ENCODE measurements at regions of chr1 and their contacts with region 1.

Region 1: DNA sequence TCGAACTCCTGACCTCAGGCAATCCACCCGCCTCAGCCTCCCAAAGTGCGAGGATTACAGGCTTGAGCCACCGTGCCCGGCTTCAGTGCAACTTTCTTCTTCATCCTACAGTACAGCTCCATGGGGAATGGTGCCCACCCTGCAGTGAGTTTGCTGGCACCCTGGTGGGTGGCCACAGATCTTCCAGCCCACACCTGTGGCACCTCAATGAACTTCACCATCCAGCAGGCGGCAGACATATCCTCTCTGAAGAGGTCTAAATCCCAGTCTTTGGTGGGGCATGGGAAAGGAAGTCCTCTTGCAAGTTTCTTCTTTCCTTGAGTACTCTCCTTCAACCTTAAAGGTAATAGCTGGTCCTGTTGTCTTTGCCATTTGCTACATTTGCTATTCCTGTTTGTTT is 18.1 kb upstream of the ZBTB8A start:
- DNase-seq: no peak
- ATAC-seq: peak; percentile 16; the same call in 1 of the 2 replicates
- H3K4me3 Mint-ChIP-seq: peak overlapping the region; percentile 67
- H3K27ac Mint-ChIP-seq: 0 out of 2 replicates have a peak overlapping the region, but pooled peaks have one; percentile 87
- H3K4me1 Mint-ChIP-seq: peaks cover 2% of the 10 kb centered on the region; the same call in 1 of the 2 replicates
- H3K27me3 Mint-ChIP-seq: no peaks in the 10 kb centered on the region; the same call in none of the 2 replicates
- CTCF ChIP-seq: no peak

Region 2: GRCh38 chr1:32400876-32401631 is 120.1 kb before region 1 on chr1:
- CTCF ChIA-PET with region 1: interaction called, 21 read pairs
- POLR2A ChIA-PET with region 1: no interaction called
- DNase-seq: peak; percentile 91
- ATAC-seq: peak; percentile 98
- H3K4me3 Mint-ChIP-seq: no peak overlapping the region
- H3K27ac Mint-ChIP-seq: no peak overlapping the region; the same call in 1 of the 2 replicates
- H3K4me1 Mint-ChIP-seq: no peaks in the 10 kb centered on the region; the same call in 1 of the 2 replicates
- H3K27me3 Mint-ChIP-seq: no peaks in the 10 kb centered on the region
- CTCF ChIP-seq: peak; percentile 78

Region 3: GRCh38 chr1:32500387-32501209 is 20.6 kb before region 1 on chr1:
- CTCF ChIA-PET with region 1: interaction called, 11 read pairs
- POLR2A ChIA-PET with region 1: interaction called, 6 read pairs
- DNase-seq: peak; percentile 75
- ATAC-seq: peak; percentile 89
- H3K4me3 Mint-ChIP-seq: peak overlapping the region; percentile 90
- H3K27ac Mint-ChIP-seq: peak overlapping the region; percentile 98
- H3K4me1 Mint-ChIP-seq: peaks cover 12% of the 10 kb centered on the region
- H3K27me3 Mint-ChIP-seq: no peaks in the 10 kb centered on the region
- CTCF ChIP-seq: no peak

Region 4: GRCh38 chr1:32536117-32536516 is 15.0 kb after region 1 on chr1:
- CTCF ChIA-PET with region 1: interaction called, 26 read pairs
- POLR2A ChIA-PET with region 1: no interaction called
- DNase-seq: no peak
- ATAC-seq: no peak
- H3K4me3 Mint-ChIP-seq: no peak overlapping the region
- H3K27ac Mint-ChIP-seq: no peak overlapping the region
- H3K4me1 Mint-ChIP-seq: peaks cover 16% of the 10 kb centered on the region
- H3K27me3 Mint-ChIP-seq: peaks cover 20% of the 10 kb centered on the region
- CTCF ChIP-seq: no peak

Region 5: GRCh38 chr1:32612189-32612881 is 91.2 kb after region 1 on chr1:
- CTCF ChIA-PET with region 1: interaction called, 14 read pairs
- POLR2A ChIA-PET with region 1: no interaction called
- DNase-seq: peak; percentile 90
- ATAC-seq: peak; percentile 99
- H3K4me3 Mint-ChIP-seq: peak overlapping the region; percentile 75
- H3K27ac Mint-ChIP-seq: peak overlapping the region; percentile 10
- H3K4me1 Mint-ChIP-seq: peaks cover 5% of the 10 kb centered on the region
- H3K27me3 Mint-ChIP-seq: no peaks in the 10 kb centered on the region
- CTCF ChIP-seq: no peak

Region 6: GRCh38 chr1:32644426-32644825 is 123.3 kb after region 1 on chr1:
- CTCF ChIA-PET with region 1: interaction called, 21 read pairs
- POLR2A ChIA-PET with region 1: no interaction called
- DNase-seq: no peak
- ATAC-seq: no peak
- H3K4me3 Mint-ChIP-seq: no peak overlapping the region
- H3K27ac Mint-ChIP-seq: no peak overlapping the region
- H3K4me1 Mint-ChIP-seq: peaks cover 16% of the 10 kb centered on the region
- H3K27me3 Mint-ChIP-seq: no peaks in the 10 kb centered on the region
- CTCF ChIP-seq: no peak

Region 7: GRCh38 chr1:32716312-32717148 is 195.4 kb after region 1 on chr1:
- CTCF ChIA-PET with region 1: interaction called, 13 read pairs
- POLR2A ChIA-PET with region 1: no interaction called
- DNase-seq: peak; percentile 99
- ATAC-seq: peak; percentile 95
- H3K4me3 Mint-ChIP-seq: peak overlapping the region; percentile 45
- H3K27ac Mint-ChIP-seq: peak overlapping the region; percentile 92
- H3K4me1 Mint-ChIP-seq: peaks cover 29% of the 10 kb centered on the region
- H3K27me3 Mint-ChIP-seq: peaks cover 3% of the 10 kb centered on the region
- CTCF ChIP-seq: no peak

Measured in WTC11 (cell line).